H1 (cell line): ENCODE measurements at regions of chr19 and their contacts with region 1.

Region 1: DNA sequence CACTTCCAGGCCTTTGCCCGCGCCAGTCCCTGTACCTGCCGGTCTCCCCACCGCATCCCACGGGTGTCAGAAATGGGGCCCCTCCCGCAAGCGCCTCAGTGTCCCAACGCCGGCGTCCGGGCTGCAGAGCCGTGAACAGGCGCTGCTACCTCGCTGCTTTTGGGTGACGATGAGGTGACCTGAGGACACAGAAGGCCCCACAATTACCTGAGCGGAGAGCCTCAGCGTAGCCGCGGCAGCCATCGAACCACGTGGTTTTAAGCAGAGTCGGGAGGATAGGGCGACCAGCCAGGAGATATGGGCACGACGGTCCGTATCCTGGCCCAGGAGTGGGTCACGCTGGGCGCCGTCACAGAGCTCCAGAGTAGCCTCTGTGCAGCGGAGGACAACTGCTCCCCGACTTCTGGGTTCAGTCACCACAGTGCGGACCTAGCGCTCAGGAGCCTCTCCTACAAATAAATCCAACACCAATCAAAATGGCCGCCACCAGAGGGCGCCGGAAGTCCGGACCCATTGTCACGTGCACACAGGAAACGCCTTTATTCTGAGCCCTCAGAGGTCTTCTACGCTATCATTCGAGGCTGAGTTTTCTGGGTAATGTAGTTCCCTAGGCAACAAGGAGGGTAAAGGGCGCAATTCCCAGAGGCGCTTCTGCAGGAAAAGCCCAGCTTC is at the start of gene ZNF814:
- DNase-seq: peak; percentile 85 to 93
- H3K4me3 ChIP-seq: peak within 1 kb of the TSS; percentile 89 to 97 (median 96)
- H3K27ac ChIP-seq: peak within 1 kb of the TSS; percentile 94
- H3K4me1 ChIP-seq: peaks cover 3 to 18% (median 10%) of the 10 kb centered on the region in 4 experiments; a peak in 6 of 7 replicates
- H3K27me3 ChIP-seq: no peaks in the 10 kb centered on the region
- CTCF ChIP-seq: peak in 2 of 3 experiments; percentile 24 to 30; a peak in 2 of 4 replicates
- EP300 ChIP-seq: no peak
- POLR2A ChIP-seq: peak; percentile 82 to 96
- RAD21 ChIP-seq: no peak; a peak in 1 of 4 replicates
- total RNA-seq, gene ZNF814: 90.7 and 90.9 TPM in 2 replicates

Region 2: DNA sequence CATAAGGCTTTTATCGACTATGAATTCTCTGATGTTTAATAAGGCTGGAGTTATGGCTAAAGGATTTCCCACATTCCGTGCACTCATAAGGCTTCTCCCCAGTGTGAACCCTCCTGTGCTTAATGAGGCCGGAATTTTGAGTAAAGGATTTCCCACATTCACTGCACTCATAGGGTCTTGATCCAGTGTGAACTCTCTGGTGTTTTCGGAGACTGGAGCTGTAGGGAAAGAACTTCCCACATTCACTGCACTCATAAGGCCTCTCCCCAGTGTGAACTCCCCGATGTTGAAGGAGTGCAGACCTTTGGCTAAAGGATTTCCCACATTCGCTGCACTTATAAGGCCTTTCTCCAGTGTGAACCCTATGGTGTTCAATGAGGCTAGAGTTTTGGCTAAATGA is 187.1 kb before region 1 on chr19:
- CTCF ChIA-PET with region 1: no interaction called
- POLR2A ChIA-PET with region 1: no interaction called
- DNase-seq: no peak
- H3K4me3 ChIP-seq: no peak overlapping the region
- H3K27ac ChIP-seq: no peak overlapping the region
- H3K4me1 ChIP-seq: no peaks in the 10 kb centered on the region; a peak in 2 of 7 replicates
- H3K27me3 ChIP-seq: no peaks in the 10 kb centered on the region
- CTCF ChIP-seq: no peak
- EP300 ChIP-seq: no peak
- POLR2A ChIP-seq: no peak
- RAD21 ChIP-seq: no peak

Region 3: DNA sequence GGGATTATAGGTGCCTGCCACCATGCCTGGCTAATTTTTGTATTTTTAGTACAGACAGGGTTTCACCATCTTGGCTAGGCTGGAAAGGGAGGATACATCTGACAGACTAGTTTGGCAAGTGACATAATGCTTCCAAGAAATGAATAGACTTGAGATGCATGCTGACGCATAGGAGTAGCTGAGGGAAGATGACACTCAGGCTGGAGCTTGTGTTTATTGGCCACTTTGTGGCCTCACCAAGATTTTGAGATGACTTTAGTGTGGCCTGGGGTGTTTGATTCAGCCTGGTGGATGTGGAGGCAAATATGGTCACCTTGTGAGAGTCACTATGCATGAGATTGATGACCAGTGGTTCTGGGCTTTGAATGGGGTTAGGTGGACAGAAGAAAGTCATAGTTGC is 115.2 kb before region 1 on chr19:
- CTCF ChIA-PET with region 1: no interaction called
- POLR2A ChIA-PET with region 1: no interaction called
- DNase-seq: no peak
- H3K4me3 ChIP-seq: no peak overlapping the region
- H3K27ac ChIP-seq: no peak overlapping the region
- H3K4me1 ChIP-seq: peaks cover 0 to 5% (median 0%) of the 10 kb centered on the region in 4 experiments; a peak in 3 of 7 replicates
- H3K27me3 ChIP-seq: no peaks in the 10 kb centered on the region
- CTCF ChIP-seq: no peak
- EP300 ChIP-seq: no peak
- POLR2A ChIP-seq: no peak
- RAD21 ChIP-seq: no peak

Region 4: GRCh38 chr19:57830071-57830602 is 58.6 kb before region 1 on chr19 and contains the start of gene ZNF587B:
- CTCF ChIA-PET with region 1: interaction called, 3 read pairs
- POLR2A ChIA-PET with region 1: interaction called, 15 read pairs
- DNase-seq: peak; percentile 77 to 92
- H3K4me3 ChIP-seq: peak within 1 kb of the TSS; percentile 73 to 99 (median 94)
- H3K27ac ChIP-seq: peak within 1 kb of the TSS; percentile 96
- H3K4me1 ChIP-seq: peaks cover 0 to 8% (median 5%) of the 10 kb centered on the region in 4 experiments; a peak in 4 of 7 replicates
- H3K27me3 ChIP-seq: no peaks in the 10 kb centered on the region
- CTCF ChIP-seq: peak in 2 of 3 experiments; percentile 8 to 16; a peak in 2 of 4 replicates
- EP300 ChIP-seq: no peak
- POLR2A ChIP-seq: peak; percentile 68 to 95
- RAD21 ChIP-seq: peak in 1 of 2 experiments; percentile 19; a peak in 2 of 4 replicates
- total RNA-seq, gene ZNF587B: 53.7 and 60.1 TPM in 2 replicates

Region 5: DNA sequence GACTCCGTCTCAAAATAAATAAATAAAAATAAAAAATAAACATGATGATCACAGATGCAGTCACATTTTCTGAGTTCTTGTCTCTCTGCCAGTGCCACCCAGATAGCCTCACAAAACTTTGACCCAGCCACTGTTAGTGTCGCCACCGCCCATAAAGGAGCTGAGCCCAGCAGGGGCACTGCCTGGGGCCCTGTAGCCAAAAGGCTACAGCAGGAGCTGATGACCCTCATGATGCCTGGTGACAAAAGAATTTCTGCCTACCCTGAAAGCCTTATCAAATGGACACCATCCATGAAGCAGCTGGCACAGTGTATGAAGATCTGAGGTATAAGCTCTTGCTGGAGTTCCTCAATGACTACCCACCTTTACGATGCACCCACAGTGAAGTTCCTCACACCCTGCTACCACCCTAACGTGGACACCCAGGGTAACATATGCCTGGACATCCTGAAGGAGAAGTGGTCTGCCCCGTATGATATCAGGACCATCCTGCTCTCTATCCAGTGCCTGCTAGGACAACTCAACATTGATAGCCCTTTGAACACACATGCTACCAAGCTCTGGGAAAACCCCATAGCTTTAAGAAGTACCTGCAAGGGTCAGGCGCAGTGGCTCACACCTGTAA is 20.7 kb before region 1 on chr19:
- CTCF ChIA-PET with region 1: interaction called, 4 read pairs
- POLR2A ChIA-PET with region 1: interaction called, 94 read pairs
- DNase-seq: no peak
- H3K4me3 ChIP-seq: no peak overlapping the region
- H3K27ac ChIP-seq: no peak overlapping the region
- H3K4me1 ChIP-seq: no peaks in the 10 kb centered on the region
- H3K27me3 ChIP-seq: no peaks in the 10 kb centered on the region
- CTCF ChIP-seq: no peak
- EP300 ChIP-seq: no peak
- POLR2A ChIP-seq: peak; percentile 52 to 56; a peak in 2 of 3 replicates
- RAD21 ChIP-seq: no peak

Region 6: DNA sequence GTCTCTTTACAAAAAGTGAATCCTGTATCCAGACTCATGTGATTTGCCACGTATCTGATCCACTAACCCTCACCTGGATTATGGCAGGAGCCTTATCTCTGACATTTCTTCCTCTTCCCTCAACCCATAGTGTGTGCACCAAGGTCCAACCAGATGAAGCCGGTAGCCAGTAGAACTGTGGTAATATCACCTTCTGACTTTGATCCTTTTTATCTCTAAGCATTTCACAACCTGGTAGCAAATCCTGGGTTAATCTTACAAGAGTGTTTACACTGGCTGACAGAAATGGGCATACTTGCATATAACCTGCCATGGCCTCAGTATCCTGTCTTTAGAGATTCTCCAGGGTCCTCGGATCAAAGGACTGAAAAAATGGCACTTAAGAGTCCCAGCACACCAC is 25.8 kb after region 1 on chr19:
- CTCF ChIA-PET with region 1: no interaction called
- POLR2A ChIA-PET with region 1: interaction called, 33 read pairs
- DNase-seq: no peak
- H3K4me3 ChIP-seq: no peak overlapping the region
- H3K27ac ChIP-seq: no peak overlapping the region
- H3K4me1 ChIP-seq: peaks cover 0 to 1% (median 0%) of the 10 kb centered on the region in 4 experiments; a peak in 1 of 7 replicates
- H3K27me3 ChIP-seq: no peaks in the 10 kb centered on the region
- CTCF ChIP-seq: no peak
- EP300 ChIP-seq: no peak
- POLR2A ChIP-seq: no peak
- RAD21 ChIP-seq: no peak

Region 7: GRCh38 chr19:58002384-58003173 is 113.9 kb after region 1 on chr19 and contains the start of gene ZNF606:
- CTCF ChIA-PET with region 1: no interaction called
- POLR2A ChIA-PET with region 1: no interaction called
- DNase-seq: peak in 1 of 2 experiments; percentile 87
- H3K4me3 ChIP-seq: peak within 1 kb of the TSS; percentile 77 to 97 (median 84)
- H3K27ac ChIP-seq: peak within 1 kb of the TSS; percentile 87
- H3K4me1 ChIP-seq: peaks cover 0 to 5% (median under 1%) of the 10 kb centered on the region in 4 experiments; a peak in 2 of 7 replicates
- H3K27me3 ChIP-seq: no peaks in the 10 kb centered on the region; a peak in 1 of 7 replicates
- CTCF ChIP-seq: no peak
- EP300 ChIP-seq: no peak
- POLR2A ChIP-seq: peak; percentile 77 to 86
- RAD21 ChIP-seq: no peak
- total RNA-seq, gene ZNF606: 17.5 and 19.3 TPM in 2 replicates

Region 8: GRCh38 chr19:58154679-58155648 is 266.3 kb after region 1 on chr19:
- CTCF ChIA-PET with region 1: no interaction called
- POLR2A ChIA-PET with region 1: interaction called, 10 read pairs
- DNase-seq: peak; percentile 82 to 100
- H3K4me3 ChIP-seq: peak overlapping the region; percentile 74 to 91 (median 82)
- H3K27ac ChIP-seq: peak overlapping the region; percentile 75; the same call in 1 of the 2 replicates
- H3K4me1 ChIP-seq: no peaks in the 10 kb centered on the region; a peak in 2 of 7 replicates
- H3K27me3 ChIP-seq: no peaks in the 10 kb centered on the region
- CTCF ChIP-seq: peak; percentile 97 to 98 (median 97)
- EP300 ChIP-seq: 0 out of 3 replicates have a peak, but pooled peaks of 1 of the 2 experiments have one; percentile 23
- POLR2A ChIP-seq: peak in 1 of 2 experiments; percentile 72; a peak in 2 of 3 replicates
- RAD21 ChIP-seq: peak; percentile 99